ENCODE measurements at regions of chr3 and their contacts with region 1.

Region 1: GRCh38 chr3:46629551-46630517 is 17.5 kb downstream of the FAM240A start:
- DNase-seq: peak; percentile 89
- CTCF ChIP-seq: peak; percentile 99

Region 2: GRCh38 chr3:46489875-46490274 is 140.0 kb before region 1 on chr3:
- in situ Hi-C with region 1: loop called (anchors 5 kb)
- DNase-seq: no peak
- CTCF ChIP-seq: no peak

Region 3: GRCh38 chr3:46737329-46737731 is 107.5 kb after region 1 on chr3:
- in situ Hi-C with region 1: no loop called
- DNase-seq: no peak
- CTCF ChIP-seq: no peak